CD4-positive, alpha-beta memory T cell (primary cell): ENCODE measurements at regions of chr16 and their contacts with region 1.

Region 1: DNA sequence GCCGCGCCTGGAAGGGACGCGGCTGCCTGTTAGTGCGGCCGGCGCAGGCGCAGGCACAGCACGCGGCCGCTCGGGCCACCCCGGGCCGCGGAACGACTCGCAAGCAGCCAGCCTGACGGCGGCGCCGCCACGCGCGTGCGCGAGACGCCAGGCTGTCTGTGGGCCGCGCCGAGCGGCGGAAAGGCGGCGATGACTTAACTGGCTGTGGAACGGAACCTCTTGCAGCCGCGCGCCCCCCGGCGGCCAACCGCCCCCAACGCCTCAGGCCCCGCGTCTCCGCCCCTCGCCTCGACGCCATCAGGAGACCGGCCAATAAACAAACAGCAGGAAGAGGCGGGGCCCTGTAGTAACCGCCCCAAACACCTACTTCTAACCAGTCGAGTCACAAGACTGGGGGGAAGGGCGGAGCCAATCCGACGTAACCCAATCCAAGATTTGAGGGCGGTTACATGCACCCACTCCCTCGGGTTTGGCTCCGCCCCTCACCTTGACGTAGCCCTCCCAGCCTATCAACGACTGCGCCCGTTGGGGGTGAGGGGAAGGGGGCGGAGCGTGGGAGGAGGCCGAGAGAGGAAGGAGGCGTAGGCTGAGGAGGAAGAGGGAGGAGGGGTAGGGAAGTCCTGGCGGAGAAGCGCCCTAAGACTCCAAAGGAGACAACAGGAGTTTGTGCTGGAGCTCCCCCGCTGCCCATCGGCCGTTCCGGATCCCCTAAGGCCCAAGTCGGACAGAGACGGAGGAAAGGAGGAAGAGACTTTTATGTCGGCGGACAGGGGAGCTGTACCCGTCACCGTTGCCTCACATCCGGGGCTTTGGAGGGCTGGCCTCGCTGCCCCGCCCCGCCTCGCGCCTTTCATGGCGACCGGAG is at the start of gene FBRS:
- DNase-seq: peak; percentile 100
- H3K4me3 ChIP-seq: peak within 1 kb of the TSS; percentile 70 to 93
- H3K4me3 Mint-ChIP-seq: peak within 1 kb of the TSS; percentile 92 to 99 (median 96)
- H3K27ac ChIP-seq: peak within 1 kb of the TSS; percentile 99
- H3K27ac Mint-ChIP-seq: peak within 1 kb of the TSS; percentile 98 to 100 (median 100)
- H3K4me1 ChIP-seq: peaks cover 43% of the 10 kb centered on the region
- H3K4me1 Mint-ChIP-seq: peaks cover 25 to 52% (median 39%) of the 10 kb centered on the region in 4 donors
- H3K27me3 ChIP-seq: no peaks in the 10 kb centered on the region
- H3K27me3 Mint-ChIP-seq: no peaks in the 10 kb centered on the region
- total RNA-seq, gene FBRS: 164 to 172 TPM

Region 2: GRCh38 chr16:30065143-30065850 is 592.8 kb before region 1 on chr16 and contains the start of gene ALDOA:
- CTCF ChIA-PET with region 1: interaction called, 3 read pairs
- POLR2A ChIA-PET with region 1: interaction called, 10 read pairs
- intact Hi-C with region 1: no loop called
- DNase-seq: peak; percentile 94 to 96 (median 94)
- H3K4me3 ChIP-seq: peak within 1 kb of the TSS; percentile 77 to 93
- H3K4me3 Mint-ChIP-seq: peak within 1 kb of the TSS; percentile 98 to 100 (median 99)
- H3K27ac ChIP-seq: peak within 1 kb of the TSS; percentile 94
- H3K27ac Mint-ChIP-seq: peak within 1 kb of the TSS; percentile 95 to 100 (median 97)
- H3K4me1 ChIP-seq: peaks cover 47% of the 10 kb centered on the region
- H3K4me1 Mint-ChIP-seq: peaks cover 17 to 58% (median 33%) of the 10 kb centered on the region in 4 donors
- H3K27me3 ChIP-seq: no peaks in the 10 kb centered on the region
- H3K27me3 Mint-ChIP-seq: no peaks in the 10 kb centered on the region
- total RNA-seq, gene ALDOA: 558 to 563 TPM

Region 3: DNA sequence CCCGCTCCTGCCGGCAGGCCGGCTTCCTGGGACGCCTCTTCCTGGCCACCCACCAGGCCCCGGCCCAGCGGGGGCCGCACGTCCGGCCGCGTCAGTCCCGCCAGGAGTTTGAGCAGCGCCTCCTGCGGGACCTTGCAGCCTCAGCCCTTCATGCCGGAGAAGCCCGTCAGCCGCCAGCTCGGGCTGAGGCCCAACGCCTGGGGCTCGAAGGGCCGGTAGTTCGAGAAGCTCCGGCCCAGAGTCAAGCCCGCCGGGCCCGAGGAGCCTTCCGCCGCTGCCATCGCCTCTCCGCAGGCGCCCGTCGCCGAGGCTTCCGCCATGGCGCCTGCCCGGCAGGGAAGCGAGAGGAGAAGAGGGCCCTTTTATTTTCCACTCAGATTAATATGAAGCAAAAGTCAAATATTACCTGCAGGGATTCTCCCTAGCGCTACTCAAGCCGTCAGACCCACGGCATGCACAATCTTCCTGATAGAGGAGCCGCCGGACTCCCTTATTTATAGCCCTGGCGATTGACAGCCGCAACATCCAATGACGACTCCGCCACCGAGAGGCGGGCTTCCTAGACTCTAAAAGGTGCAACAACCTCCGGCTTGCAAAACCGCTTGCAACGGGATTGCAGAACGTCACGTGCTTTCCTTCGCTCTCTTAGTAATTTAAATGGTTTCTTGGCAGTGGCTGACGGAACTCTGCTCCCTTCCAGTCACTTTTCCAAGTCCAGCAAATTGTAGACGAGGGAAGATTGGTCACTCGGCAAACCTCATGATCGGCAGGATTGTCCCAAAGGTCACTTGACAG is 212.5 kb before region 1 on chr16 and contains the start of gene SEPHS2:
- CTCF ChIA-PET with region 1: no interaction called
- POLR2A ChIA-PET with region 1: no interaction called
- intact Hi-C with region 1: loop called (anchors 1 kb)
- DNase-seq: peak; percentile 93 to 98 (median 94)
- H3K4me3 ChIP-seq: peak within 1 kb of the TSS; percentile 92 to 94
- H3K4me3 Mint-ChIP-seq: peak within 1 kb of the TSS; percentile 89 to 98 (median 96)
- H3K27ac ChIP-seq: peak within 1 kb of the TSS; percentile 96
- H3K27ac Mint-ChIP-seq: peak within 1 kb of the TSS; percentile 87 to 98 (median 96)
- H3K4me1 ChIP-seq: peaks cover 42% of the 10 kb centered on the region
- H3K4me1 Mint-ChIP-seq: peaks cover 24 to 44% (median 36%) of the 10 kb centered on the region in 4 donors
- H3K27me3 ChIP-seq: no peaks in the 10 kb centered on the region
- H3K27me3 Mint-ChIP-seq: no peaks in the 10 kb centered on the region
- total RNA-seq, gene SEPHS2: 42.0 to 44.4 TPM

Region 4: DNA sequence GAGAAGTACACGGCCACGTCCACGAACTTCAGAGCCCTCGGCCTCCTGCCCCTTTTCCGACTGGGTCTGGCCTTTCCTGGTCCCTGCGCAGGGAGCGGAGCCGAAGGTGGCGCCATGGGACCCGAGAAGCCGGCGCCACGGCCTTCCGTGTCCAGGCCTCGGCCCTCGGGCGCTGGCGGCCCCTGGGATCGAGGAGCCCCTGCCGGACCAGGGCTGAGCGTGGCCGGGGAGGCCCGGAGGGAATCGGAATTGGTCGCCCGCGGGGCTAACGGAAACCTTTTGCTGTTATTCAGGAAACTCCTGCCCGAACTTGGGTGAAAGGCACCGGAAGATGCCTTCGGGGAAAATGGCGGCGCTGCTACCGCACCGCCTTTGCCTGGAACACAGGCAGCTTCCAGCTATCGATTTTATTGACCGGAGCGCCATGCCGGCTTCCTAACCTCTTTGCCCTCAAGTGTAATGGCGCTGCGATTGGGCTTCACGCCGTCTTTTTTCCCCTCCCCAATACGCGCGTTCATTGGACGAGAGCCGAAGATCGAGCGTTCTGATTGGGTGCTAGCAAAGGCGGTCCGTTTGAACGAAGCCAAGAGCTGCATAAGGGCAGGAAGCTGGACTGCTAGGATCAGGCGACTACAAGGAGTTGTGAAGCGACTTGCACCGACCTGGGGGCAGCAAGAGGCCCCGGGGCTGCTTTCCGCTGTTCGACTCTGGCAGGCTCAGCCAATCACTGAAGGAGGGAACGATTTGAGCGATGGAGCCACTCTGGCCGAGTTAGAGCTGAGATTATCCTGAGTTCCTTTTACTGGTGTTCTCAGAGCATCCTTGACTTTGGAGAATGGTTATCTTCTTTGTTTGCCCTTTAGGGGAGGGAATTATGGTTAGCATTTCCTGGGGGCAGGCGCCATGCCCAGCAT is 47.9 kb before region 1 on chr16 and contains the start of gene ZNF689:
- CTCF ChIA-PET with region 1: interaction called, 3 read pairs
- POLR2A ChIA-PET with region 1: interaction called, 21 read pairs
- intact Hi-C with region 1: loop called (anchors 1 kb)
- DNase-seq: peak; percentile 92 to 98 (median 95)
- H3K4me3 ChIP-seq: peak within 1 kb of the TSS; percentile 71 to 99
- H3K4me3 Mint-ChIP-seq: peak within 1 kb of the TSS; percentile 85 to 96 (median 94)
- H3K27ac ChIP-seq: peak within 1 kb of the TSS; percentile 97
- H3K27ac Mint-ChIP-seq: peak within 1 kb of the TSS; percentile 93 to 98 (median 96)
- H3K4me1 ChIP-seq: peaks cover 21% of the 10 kb centered on the region
- H3K4me1 Mint-ChIP-seq: peaks cover 10 to 18% (median 13%) of the 10 kb centered on the region in 4 donors
- H3K27me3 ChIP-seq: no peaks in the 10 kb centered on the region
- H3K27me3 Mint-ChIP-seq: no peaks in the 10 kb centered on the region
- total RNA-seq, gene ZNF689: 13.1 to 14.5 TPM

Region 5: DNA sequence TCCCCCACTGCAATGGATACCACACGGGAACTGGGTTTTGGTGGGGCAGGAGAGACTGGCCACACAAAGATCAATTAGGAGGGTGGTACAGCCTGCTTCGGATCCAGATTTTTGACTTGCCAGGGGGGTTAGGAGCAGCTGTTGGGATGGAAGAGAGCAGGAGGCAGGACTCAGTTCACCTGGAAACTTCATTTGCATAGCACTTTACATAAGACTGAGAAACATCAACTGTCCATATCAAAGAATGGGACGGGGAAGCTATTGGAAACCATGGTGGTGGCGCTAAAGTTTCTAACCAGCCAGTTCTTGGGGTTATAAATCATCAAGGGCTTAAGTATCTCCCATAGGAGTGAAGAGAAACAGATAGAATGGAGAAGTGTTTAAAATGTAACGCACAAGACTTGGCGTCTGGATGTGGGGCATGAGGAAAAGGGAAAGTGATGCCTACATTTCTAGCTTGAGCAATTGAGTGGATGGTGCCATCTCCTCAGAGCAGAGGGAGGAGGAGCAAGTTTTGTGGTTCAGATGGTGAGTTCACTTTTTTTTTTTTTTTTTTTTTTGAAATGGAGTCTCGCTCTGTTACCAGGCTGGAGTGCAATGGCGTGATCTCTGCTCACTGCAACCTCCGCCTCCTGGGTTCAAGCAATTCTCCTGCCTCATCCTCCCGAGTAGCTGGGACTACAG is 34.4 kb after region 1 on chr16:
- CTCF ChIA-PET with region 1: interaction called, 47 read pairs
- POLR2A ChIA-PET with region 1: interaction called, 154 read pairs
- intact Hi-C with region 1: loop called (anchors 1 kb)
- DNase-seq: no peak
- H3K4me3 ChIP-seq: no peak overlapping the region
- H3K4me3 Mint-ChIP-seq: no peak overlapping the region
- H3K27ac ChIP-seq: no peak overlapping the region
- H3K27ac Mint-ChIP-seq: peak overlapping the region in 5 of 7 donors; percentile 20 to 62 (median 29)
- H3K4me1 ChIP-seq: peaks cover 14% of the 10 kb centered on the region
- H3K4me1 Mint-ChIP-seq: peaks cover 8 to 19% (median 12%) of the 10 kb centered on the region in 4 donors
- H3K27me3 ChIP-seq: no peaks in the 10 kb centered on the region
- H3K27me3 Mint-ChIP-seq: no peaks in the 10 kb centered on the region

Region 6: GRCh38 chr16:30813821-30814189 is 155.7 kb after region 1 on chr16:
- CTCF ChIA-PET with region 1: no interaction called
- POLR2A ChIA-PET with region 1: no interaction called
- intact Hi-C with region 1: loop called (anchors 5 kb)
- DNase-seq: no peak
- H3K4me3 ChIP-seq: peak overlapping the region; percentile 61 to 64
- H3K4me3 Mint-ChIP-seq: peak overlapping the region; percentile 88 to 93 (median 89)
- H3K27ac ChIP-seq: peak overlapping the region; percentile 57
- H3K27ac Mint-ChIP-seq: peak overlapping the region; percentile 81 to 91 (median 90)
- H3K4me1 ChIP-seq: peaks cover 13% of the 10 kb centered on the region
- H3K4me1 Mint-ChIP-seq: peaks cover 8 to 17% (median 12%) of the 10 kb centered on the region in 4 donors
- H3K27me3 ChIP-seq: no peaks in the 10 kb centered on the region
- H3K27me3 Mint-ChIP-seq: no peaks in the 10 kb centered on the region